ENCODE measurements at regions of chr9 and their contacts with region 1.

Region 1: GRCh38 chr9:83980395-83981125 is at the start of gene RMI1:
- DNase-seq: peak; percentile 99
- H3K4me3 ChIP-seq: peak within 1 kb of the TSS; percentile 86
- H3K27ac ChIP-seq: peak within 1 kb of the TSS; percentile 99
- H3K4me1 ChIP-seq: peaks cover 45% of the 10 kb centered on the region
- H3K27me3 ChIP-seq: no peaks in the 10 kb centered on the region
- CTCF ChIP-seq: peak; percentile 34
- total RNA-seq, gene RMI1: 32.2 and 36.4 TPM in 2 replicates

Region 2: DNA sequence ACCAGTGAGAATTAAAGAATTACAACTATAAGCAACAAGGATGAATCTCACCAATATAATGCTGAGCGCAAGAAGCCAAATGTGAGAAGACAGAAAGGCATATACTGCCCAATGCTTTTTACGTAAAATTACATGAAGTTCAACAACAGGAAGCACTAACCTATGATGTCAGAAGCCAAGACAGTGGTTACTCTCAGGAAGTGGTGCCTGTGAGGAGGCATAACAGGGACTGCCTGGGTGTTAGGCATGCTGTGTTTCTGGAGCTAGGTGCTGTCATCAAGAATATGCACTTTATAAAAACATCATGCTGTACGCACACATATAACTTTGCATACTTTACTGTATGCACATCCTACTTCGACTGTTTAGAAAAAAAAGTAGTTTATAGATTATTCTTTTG is 472.5 kb before region 1 on chr9:
- CTCF ChIA-PET with region 1: no interaction called
- POLR2A ChIA-PET with region 1: no interaction called
- intact Hi-C with region 1: no loop called
- DNase-seq: no peak
- H3K4me3 ChIP-seq: no peak overlapping the region
- H3K27ac ChIP-seq: no peak overlapping the region
- H3K4me1 ChIP-seq: no peaks in the 10 kb centered on the region
- H3K27me3 ChIP-seq: no peaks in the 10 kb centered on the region
- CTCF ChIP-seq: no peak

Region 3: DNA sequence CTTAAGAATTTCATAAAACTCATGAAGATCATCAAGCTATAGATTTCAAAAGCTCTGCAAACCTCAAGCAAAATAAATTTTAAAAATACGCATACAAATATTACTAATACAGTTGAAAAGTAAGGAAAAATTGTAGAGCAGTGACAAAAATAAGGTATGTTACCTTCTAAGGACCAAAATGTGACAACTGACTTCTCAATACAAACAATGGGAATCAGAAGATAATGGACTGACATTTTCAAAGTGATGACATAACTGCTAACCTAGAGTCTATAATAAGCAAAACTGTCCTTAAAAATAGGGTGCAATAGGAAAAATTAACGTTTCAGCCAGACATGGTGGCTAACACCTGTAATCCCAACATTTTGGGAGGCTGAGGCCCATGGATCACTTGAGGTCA is 27.1 kb after region 1 on chr9:
- CTCF ChIA-PET with region 1: no interaction called
- POLR2A ChIA-PET with region 1: interaction called, 12 read pairs
- intact Hi-C with region 1: no loop called
- DNase-seq: no peak
- H3K4me3 ChIP-seq: no peak overlapping the region
- H3K27ac ChIP-seq: no peak overlapping the region
- H3K4me1 ChIP-seq: no peaks in the 10 kb centered on the region
- H3K27me3 ChIP-seq: no peaks in the 10 kb centered on the region
- CTCF ChIP-seq: no peak

Region 4: GRCh38 chr9:84254972-84255371 is 274.4 kb after region 1 on chr9:
- CTCF ChIA-PET with region 1: no interaction called
- POLR2A ChIA-PET with region 1: no interaction called
- intact Hi-C with region 1: no loop called
- DNase-seq: no peak
- H3K4me3 ChIP-seq: no peak overlapping the region
- H3K27ac ChIP-seq: no peak overlapping the region
- H3K4me1 ChIP-seq: no peaks in the 10 kb centered on the region
- H3K27me3 ChIP-seq: peaks cover 3% of the 10 kb centered on the region
- CTCF ChIP-seq: no peak

Region 5: GRCh38 chr9:85508616-85509015 is 1528.1 kb after region 1 on chr9:
- CTCF ChIA-PET with region 1: no interaction called
- POLR2A ChIA-PET with region 1: interaction called, 11 read pairs
- intact Hi-C with region 1: no loop called
- DNase-seq: no peak
- H3K4me3 ChIP-seq: no peak overlapping the region
- H3K27ac ChIP-seq: no peak overlapping the region
- H3K4me1 ChIP-seq: no peaks in the 10 kb centered on the region
- H3K27me3 ChIP-seq: peaks cover 4% of the 10 kb centered on the region
- CTCF ChIP-seq: peak; percentile 35; the same call in 1 of the 2 replicates